Naive thymus-derived CD8-positive, alpha-beta T cell (primary cell): ENCODE measurements at regions of chr20 and their contacts with region 1.

Region 1: GRCh38 chr20:13784893-13785715 is at the starts of genes ESF1 and NDUFAF5:
- DNase-seq: peak; percentile 78 to 96 (median 91)
- ATAC-seq: peak; percentile 95 to 96
- H3K4me3 Mint-ChIP-seq: peak within 1 kb of the TSS; percentile 89 to 100 (median 99)
- H3K27ac Mint-ChIP-seq: peak within 1 kb of the TSS; percentile 94 to 99 (median 98)
- H3K4me1 Mint-ChIP-seq: peaks cover 30 to 66% (median 52%) of the 10 kb centered on the region in 4 donors
- H3K27me3 Mint-ChIP-seq: no peaks in the 10 kb centered on the region
- polyA plus RNA-seq, gene ESF1: 4.3 to 6.9 (median 6.1) TPM
- polyA plus RNA-seq, gene NDUFAF5: 3.1 to 10.1 (median 4.4) TPM

Region 2: DNA sequence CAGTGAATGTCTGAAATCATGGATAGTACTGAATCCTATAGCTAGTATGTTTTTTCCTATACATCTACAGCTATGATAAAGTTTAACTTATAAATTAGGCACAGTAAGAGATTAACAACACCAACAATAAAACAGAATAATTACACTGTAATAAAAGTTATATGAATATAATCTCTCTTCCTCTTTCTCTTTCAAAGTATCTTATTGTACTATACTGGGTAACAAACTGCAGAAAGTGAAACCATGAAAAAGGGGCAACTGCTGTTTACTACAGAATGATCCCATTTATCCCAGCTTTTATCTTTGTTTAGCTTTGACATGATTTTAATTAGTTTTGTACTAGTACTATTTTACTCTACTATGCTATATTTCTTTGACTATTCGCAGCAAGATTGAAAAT is 26.2 kb before region 1 on chr20:
- POLR2A ChIA-PET with region 1: no interaction called
- DNase-seq: no peak
- ATAC-seq: no peak
- H3K4me3 Mint-ChIP-seq: no peak overlapping the region
- H3K27ac Mint-ChIP-seq: no peak overlapping the region
- H3K4me1 Mint-ChIP-seq: no peaks in the 10 kb centered on the region
- H3K27me3 Mint-ChIP-seq: no peaks in the 10 kb centered on the region

Region 3: DNA sequence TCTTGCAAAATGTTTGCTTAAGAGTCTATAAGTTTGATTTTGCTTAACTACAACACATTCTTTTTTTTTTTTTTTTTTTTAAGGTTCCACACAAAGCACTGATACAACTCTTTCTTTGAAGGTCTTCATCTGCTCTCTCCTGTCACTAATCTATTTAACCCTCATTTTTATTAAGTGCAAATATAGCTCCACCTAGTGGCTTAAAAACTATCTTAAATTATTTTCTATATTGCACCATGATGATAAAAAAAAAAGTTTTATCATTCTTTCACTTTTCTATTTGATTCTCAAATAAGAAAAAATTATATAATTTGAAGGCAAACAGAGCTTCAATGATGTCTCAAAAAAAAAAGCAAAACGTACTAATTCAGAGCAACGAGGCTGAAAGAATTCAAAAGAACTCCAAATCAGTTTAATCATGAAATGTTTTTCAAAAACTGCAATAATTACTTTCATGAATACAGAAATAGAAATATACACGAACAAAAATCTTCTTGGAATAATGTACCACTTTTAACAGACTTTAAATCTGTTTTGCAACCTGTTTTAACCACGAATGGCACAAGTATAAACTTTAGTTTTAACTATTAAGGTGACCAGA is 13.2 kb before region 1 on chr20:
- POLR2A ChIA-PET with region 1: interaction called, 10 read pairs
- DNase-seq: peak in 3 of 10 donors; percentile 15 to 30 (median 28)
- ATAC-seq: no peak
- H3K4me3 Mint-ChIP-seq: no peak overlapping the region
- H3K27ac Mint-ChIP-seq: peak overlapping the region in 1 of 10 donors; percentile 20
- H3K4me1 Mint-ChIP-seq: peaks cover under 1 to 10% (median 6%) of the 10 kb centered on the region in 4 donors
- H3K27me3 Mint-ChIP-seq: no peaks in the 10 kb centered on the region

Region 4: DNA sequence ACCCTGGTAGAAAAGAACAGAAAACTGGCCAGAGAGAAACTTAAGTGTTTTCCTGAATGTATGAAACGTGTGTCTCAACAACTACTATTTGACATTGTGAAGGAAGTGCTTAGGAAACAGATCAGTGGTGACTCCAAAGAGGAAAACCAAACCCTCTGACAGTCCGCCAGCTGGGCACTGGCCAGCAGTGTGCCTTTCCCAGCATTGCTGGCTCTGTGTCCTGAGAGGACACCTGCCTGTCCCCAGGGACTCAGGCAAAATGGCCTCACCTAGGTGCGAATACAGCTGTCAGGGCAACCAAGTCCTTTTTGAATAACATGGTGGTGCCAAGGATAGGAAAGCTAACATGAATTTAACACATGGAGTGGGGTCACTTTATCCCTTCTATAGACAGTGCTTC is 72.2 kb after region 1 on chr20:
- POLR2A ChIA-PET with region 1: no interaction called
- DNase-seq: no peak
- ATAC-seq: no peak
- H3K4me3 Mint-ChIP-seq: no peak overlapping the region
- H3K27ac Mint-ChIP-seq: no peak overlapping the region
- H3K4me1 Mint-ChIP-seq: no peaks in the 10 kb centered on the region
- H3K27me3 Mint-ChIP-seq: peaks cover 2 to 25% (median 7%) of the 10 kb centered on the region in 5 donors